ENCODE measurements at regions of chr6 and their contacts with region 1.

Region 1: DNA sequence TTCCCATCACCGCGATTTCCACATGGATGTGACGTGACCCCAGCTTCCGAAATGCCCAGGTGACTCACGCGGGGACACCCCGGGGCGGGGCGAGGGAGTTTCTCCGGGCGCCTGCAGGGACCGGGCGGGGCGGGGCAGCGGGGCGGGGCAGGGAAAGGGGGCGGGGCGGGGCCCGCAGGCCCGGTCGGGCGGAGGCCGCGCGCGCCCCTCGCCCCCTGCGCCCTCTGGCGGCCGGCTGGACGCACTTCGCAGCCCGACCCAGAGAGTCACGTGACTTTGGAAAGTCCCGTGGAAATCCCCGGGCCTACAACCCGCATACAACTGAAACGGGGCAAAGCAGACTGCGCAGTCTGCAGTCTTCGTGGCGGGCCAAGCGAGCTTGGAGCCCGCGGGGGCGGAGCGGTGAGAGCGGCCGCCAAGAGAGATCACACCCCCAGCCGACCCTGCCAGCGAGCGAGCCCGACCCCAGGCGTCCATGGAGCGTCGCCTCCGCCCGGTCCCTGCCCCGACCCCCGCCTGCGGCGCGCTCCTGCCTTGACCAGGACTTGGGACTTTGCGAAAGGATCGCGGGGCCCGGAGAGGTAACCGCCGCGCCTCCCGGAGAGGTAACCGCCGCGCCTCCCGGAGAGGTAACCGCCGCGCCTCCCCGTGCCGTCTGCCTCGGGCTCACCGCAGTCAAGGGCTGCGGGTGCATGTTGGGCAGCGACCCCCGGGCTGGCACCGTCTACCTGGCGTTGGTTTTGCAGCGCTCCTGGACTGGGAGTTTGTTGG is at the start of gene TNFAIP3:
- DNase-seq: peak; percentile 94
- ATAC-seq: peak; percentile 85
- H3K4me3 ChIP-seq: peak within 1 kb of the TSS; percentile 75 to 100 (median 92)
- H3K27ac ChIP-seq: peak within 1 kb of the TSS; percentile 92
- H3K4me1 ChIP-seq: peaks cover 75% of the 10 kb centered on the region
- H3K27me3 ChIP-seq: no peaks in the 10 kb centered on the region; a peak in 1 of 5 replicates
- CTCF ChIP-seq: peak; percentile 85
- EP300 ChIP-seq: peak in 1 of 2 experiments; percentile 71; a peak in 2 of 4 replicates
- POLR2A ChIP-seq: peak; percentile 88 to 95
- RAD21 ChIP-seq: peak; percentile 99
- total RNA-seq, gene TNFAIP3: 24.7 and 28.2 TPM in 2 replicates

Region 2: GRCh38 chr6:137722749-137723272 is 144.3 kb before region 1 on chr6:
- CTCF ChIA-PET with region 1: interaction called, 5 read pairs
- POLR2A ChIA-PET with region 1: interaction called, 33 read pairs
- in situ Hi-C with region 1: no loop called
- intact Hi-C with region 1: no loop called
- DNase-seq: no peak
- ATAC-seq: peak; percentile 10
- H3K4me3 ChIP-seq: no peak overlapping the region; a peak in 1 of 6 replicates
- H3K27ac ChIP-seq: peak overlapping the region; percentile 98
- H3K4me1 ChIP-seq: peaks cover 71% of the 10 kb centered on the region
- H3K27me3 ChIP-seq: no peaks in the 10 kb centered on the region
- CTCF ChIP-seq: no peak
- EP300 ChIP-seq: no peak
- POLR2A ChIP-seq: no peak
- RAD21 ChIP-seq: no peak

Region 3: GRCh38 chr6:137794516-137795201 is 72.4 kb before region 1 on chr6:
- CTCF ChIA-PET with region 1: interaction called, 7 read pairs
- POLR2A ChIA-PET with region 1: interaction called, 17 read pairs
- in situ Hi-C with region 1: no loop called
- intact Hi-C with region 1: loop called (anchors 2 kb)
- DNase-seq: peak; percentile 99
- ATAC-seq: peak; percentile 88
- H3K4me3 ChIP-seq: peak overlapping the region; percentile 5 to 47 (median 5); a peak in 2 of 6 replicates
- H3K27ac ChIP-seq: peak overlapping the region; percentile 98
- H3K4me1 ChIP-seq: peaks cover 96% of the 10 kb centered on the region
- H3K27me3 ChIP-seq: no peaks in the 10 kb centered on the region
- CTCF ChIP-seq: peak; percentile 20; the same call in 1 of the 2 replicates
- EP300 ChIP-seq: peak; percentile 86 to 99; a peak in 3 of 4 replicates
- POLR2A ChIP-seq: no peak
- RAD21 ChIP-seq: peak; percentile 77

Region 4: GRCh38 chr6:137811121-137811915 is 55.8 kb before region 1 on chr6:
- CTCF ChIA-PET with region 1: interaction called, 3 read pairs
- POLR2A ChIA-PET with region 1: interaction called, 19 read pairs
- in situ Hi-C with region 1: loop called (anchors 10 kb)
- intact Hi-C with region 1: loop called (anchors 2 kb)
- DNase-seq: peak; percentile 90
- ATAC-seq: peak; percentile 91
- H3K4me3 ChIP-seq: no peak overlapping the region; a peak in 1 of 6 replicates
- H3K27ac ChIP-seq: peak overlapping the region; percentile 65
- H3K4me1 ChIP-seq: peaks cover 66% of the 10 kb centered on the region
- H3K27me3 ChIP-seq: no peaks in the 10 kb centered on the region
- CTCF ChIP-seq: peak; percentile 10; the same call in 1 of the 2 replicates
- EP300 ChIP-seq: peak in 1 of 2 experiments; percentile 58; a peak in 1 of 4 replicates
- POLR2A ChIP-seq: peak; percentile 37 to 46; a peak in 1 of 4 replicates
- RAD21 ChIP-seq: 0 out of 2 replicates have a peak, but pooled peaks have one; percentile 32

Region 5: DNA sequence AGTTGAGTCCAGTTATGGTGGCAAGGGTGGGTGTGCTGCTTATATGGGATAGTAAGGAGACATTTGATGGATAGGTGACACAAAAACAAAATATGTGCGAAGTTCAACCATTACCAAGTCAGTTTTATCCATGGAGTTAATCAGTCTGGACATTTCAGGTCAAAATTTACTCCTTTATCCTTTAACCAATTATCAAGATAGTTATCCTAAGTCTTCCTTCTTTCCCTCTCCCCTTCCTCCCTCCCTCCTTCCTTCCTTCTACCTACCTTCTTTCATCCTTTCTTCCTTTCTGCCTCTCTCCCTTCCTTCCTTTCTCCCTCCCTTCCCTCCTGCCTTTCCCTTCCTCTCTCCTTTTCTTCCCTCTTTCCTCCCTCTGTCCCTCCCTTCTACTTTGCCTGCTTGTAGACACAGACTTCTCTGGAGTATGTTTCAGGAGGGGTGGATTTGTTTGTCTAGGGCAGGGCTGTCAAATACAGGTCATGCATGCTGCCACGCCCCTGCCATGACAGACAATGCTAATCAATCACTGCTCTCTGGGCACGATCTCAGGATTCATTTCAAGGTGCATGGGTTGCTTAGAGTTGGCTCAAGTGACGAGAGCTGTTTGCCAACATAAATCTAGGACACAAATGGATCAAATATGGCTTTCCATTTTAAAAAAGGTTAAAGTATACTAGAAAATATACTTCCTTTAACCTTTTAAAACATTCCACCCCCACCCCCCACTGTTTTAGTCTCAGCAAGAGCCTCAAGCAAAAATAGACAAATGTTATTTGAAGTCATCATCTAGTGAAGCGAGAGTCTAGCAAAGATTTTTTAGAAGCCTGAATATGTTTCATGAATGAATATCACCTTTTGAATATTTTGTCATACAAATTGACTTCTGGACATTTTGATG is 1788.9 kb after region 1 on chr6:
- CTCF ChIA-PET with region 1: no interaction called
- POLR2A ChIA-PET with region 1: no interaction called
- in situ Hi-C with region 1: no loop called
- intact Hi-C with region 1: no loop called
- DNase-seq: peak; percentile 14
- ATAC-seq: peak; percentile 27; the same call in 2 of the 3 replicates
- H3K4me3 ChIP-seq: no peak overlapping the region
- H3K27ac ChIP-seq: no peak overlapping the region
- H3K4me1 ChIP-seq: peaks cover 31% of the 10 kb centered on the region
- H3K27me3 ChIP-seq: no peaks in the 10 kb centered on the region
- CTCF ChIP-seq: no peak
- EP300 ChIP-seq: no peak
- POLR2A ChIP-seq: no peak
- RAD21 ChIP-seq: no peak

Measured in HepG2 (cell line).